Activated CD4-positive, alpha-beta memory T cell treated with anti-CD3 and anti-CD28 coated beads for 36 hours (primary cell): ENCODE measurements at regions of chr15 and their contacts with region 1.

Region 1: GRCh38 chr15:84658080-84658787 is at the start of gene NMB:
- DNase-seq: peak; percentile 90
- H3K4me3 Mint-ChIP-seq: peak within 1 kb of the TSS; percentile 69
- H3K27ac Mint-ChIP-seq: peak within 1 kb of the TSS; percentile 68
- H3K4me1 Mint-ChIP-seq: peaks cover 34% of the 10 kb centered on the region
- H3K27me3 Mint-ChIP-seq: no peaks in the 10 kb centered on the region
- total RNA-seq, gene NMB: 6.2 to 7.8 TPM

Region 2: DNA sequence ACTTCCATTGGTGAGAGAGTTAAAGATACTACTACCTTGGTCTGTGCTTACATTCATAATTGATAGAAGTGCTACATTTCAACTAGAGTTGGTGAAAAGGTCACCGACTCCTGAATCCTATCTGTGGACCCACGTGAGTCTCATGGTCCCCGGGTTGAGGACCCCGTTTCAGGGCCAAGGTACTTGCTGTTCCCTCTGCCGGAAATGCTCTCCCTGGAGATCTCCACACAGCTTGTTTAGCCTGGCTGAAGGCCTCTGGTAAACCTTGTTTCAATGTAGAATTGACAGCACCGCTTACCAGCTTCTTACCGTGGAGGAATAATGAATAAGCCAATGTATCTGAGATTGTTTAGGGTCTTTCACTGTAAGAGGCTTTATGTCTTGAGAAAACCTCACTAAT is 648.6 kb before region 1 on chr15:
- CTCF ChIA-PET with region 1: no interaction called
- POLR2A ChIA-PET with region 1: no interaction called
- intact Hi-C with region 1: no loop called
- DNase-seq: no peak
- H3K4me3 Mint-ChIP-seq: no peak overlapping the region
- H3K27ac Mint-ChIP-seq: no peak overlapping the region
- H3K4me1 Mint-ChIP-seq: no peaks in the 10 kb centered on the region
- H3K27me3 Mint-ChIP-seq: no peaks in the 10 kb centered on the region

Region 3: DNA sequence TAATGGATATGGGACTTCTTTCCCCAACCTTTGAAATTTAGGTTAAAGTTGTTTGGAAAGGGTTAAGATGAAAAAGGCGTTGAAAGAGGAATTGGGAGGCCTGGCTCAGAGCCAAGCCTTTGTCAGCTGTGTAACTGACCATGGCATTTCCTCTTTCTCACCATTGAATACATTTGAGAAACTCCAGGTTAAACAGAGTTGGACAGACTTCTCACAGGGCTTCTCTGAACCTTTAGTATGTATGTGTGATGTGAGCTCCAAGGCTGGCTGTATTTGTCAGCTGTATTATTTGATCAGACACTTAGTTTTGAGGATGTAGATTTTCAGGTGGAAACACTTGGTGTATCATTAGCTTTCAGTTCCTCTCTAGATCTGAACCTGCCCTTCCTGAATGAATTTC is 559.1 kb before region 1 on chr15:
- CTCF ChIA-PET with region 1: no interaction called
- POLR2A ChIA-PET with region 1: no interaction called
- intact Hi-C with region 1: no loop called
- DNase-seq: no peak
- H3K4me3 Mint-ChIP-seq: no peak overlapping the region
- H3K27ac Mint-ChIP-seq: no peak overlapping the region
- H3K4me1 Mint-ChIP-seq: no peaks in the 10 kb centered on the region
- H3K27me3 Mint-ChIP-seq: peaks cover 5% of the 10 kb centered on the region

Region 4: DNA sequence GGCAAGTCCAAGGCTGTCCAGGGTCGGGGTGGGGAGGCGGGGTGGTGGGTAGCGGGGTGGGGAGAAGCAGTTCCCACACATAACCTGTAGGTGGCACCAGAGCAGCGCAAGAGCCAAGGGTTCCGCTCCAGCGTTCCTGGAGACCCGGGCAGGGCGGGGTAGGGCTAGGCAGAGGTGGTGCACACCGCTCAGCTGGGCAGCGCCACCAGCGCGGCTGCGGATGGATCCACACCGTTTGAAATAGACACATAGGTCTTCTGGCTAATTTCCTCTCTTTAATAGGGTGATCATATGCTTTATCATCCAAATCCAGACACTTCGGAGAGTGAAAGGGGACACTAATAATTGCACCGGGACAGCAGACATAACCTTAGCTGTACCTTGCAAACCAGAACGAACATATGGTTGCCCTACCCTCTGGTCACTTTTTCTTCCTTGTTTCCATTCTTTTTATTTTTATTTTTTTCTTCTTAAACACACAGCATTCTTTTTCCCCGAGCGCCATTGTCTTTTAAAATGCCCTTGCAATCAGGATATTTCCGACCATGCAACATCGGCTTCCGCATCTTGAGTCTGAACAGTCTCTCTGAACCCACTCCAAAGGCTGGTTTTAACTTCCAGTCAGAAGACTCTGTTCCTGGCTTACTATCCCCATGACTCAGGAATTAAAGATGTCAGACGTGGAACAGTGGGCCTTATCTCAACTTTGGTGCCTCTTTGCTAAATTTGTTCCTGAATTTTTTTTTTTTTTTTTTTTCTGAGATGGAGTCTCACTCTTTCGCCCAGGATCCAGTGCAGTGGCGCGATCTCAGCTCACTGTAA is 70.0 kb before region 1 on chr15:
- CTCF ChIA-PET with region 1: interaction called, 14 read pairs
- POLR2A ChIA-PET with region 1: no interaction called
- intact Hi-C with region 1: loop called (anchors 5 kb)
- DNase-seq: peak; percentile 91
- H3K4me3 Mint-ChIP-seq: peak overlapping the region; percentile 59
- H3K27ac Mint-ChIP-seq: no peak overlapping the region
- H3K4me1 Mint-ChIP-seq: peaks cover 2% of the 10 kb centered on the region
- H3K27me3 Mint-ChIP-seq: no peaks in the 10 kb centered on the region

Region 5: GRCh38 chr15:84669726-84670125 is 11.5 kb after region 1 on chr15:
- CTCF ChIA-PET with region 1: interaction called, 7 read pairs
- POLR2A ChIA-PET with region 1: interaction called, 8 read pairs
- intact Hi-C with region 1: loop called (anchors 1 kb)
- DNase-seq: peak; percentile 76
- H3K4me3 Mint-ChIP-seq: no peak overlapping the region
- H3K27ac Mint-ChIP-seq: peak overlapping the region; percentile 79
- H3K4me1 Mint-ChIP-seq: peaks cover 60% of the 10 kb centered on the region
- H3K27me3 Mint-ChIP-seq: no peaks in the 10 kb centered on the region

Region 6: DNA sequence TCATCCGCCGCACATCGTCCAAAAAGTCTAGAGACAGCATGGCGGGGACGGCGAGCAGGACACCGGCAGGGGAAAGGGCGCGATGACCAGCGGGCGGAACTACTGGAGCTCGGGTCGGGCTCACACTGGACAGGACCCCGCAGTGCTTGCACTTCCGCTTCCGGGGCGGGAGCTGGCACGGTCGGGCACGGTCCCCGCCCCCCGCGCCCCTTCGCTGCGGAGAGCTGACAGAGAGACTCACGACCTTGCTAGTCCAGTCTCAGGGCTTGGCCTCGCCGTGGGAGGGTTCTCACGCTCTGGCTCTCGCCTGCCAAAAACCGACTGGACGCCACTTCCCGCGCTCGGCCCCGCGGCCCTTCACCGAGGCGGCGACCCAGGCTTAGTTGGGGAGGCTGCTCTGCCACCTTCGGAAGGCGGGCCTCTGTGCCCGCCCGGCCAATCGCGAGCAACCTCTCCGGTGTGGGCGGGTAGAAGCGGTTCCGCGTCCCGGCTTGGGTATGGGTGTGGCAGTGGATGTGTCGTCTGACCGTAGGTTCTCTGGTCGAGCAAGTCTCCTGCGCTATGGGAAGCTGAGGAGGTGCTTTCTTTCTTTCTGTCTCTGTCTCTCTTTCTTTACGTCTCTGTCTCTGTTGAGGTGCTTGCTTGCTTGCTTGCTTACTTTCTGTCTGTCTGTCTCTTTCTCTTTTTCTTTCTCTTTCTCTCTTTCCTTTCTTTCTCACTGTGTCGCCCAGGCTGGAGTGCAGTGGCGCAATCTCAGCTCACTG is 58.0 kb after region 1 on chr15 and contains the start of gene SEC11A:
- CTCF ChIA-PET with region 1: interaction called, 25 read pairs
- POLR2A ChIA-PET with region 1: interaction called, 9 read pairs
- intact Hi-C with region 1: loop called (anchors 2 kb)
- DNase-seq: peak; percentile 96
- H3K4me3 Mint-ChIP-seq: peak within 1 kb of the TSS; percentile 92
- H3K27ac Mint-ChIP-seq: peak within 1 kb of the TSS; percentile 93
- H3K4me1 Mint-ChIP-seq: peaks cover 46% of the 10 kb centered on the region
- H3K27me3 Mint-ChIP-seq: no peaks in the 10 kb centered on the region
- total RNA-seq, gene SEC11A: 132 to 136 TPM

Region 7: GRCh38 chr15:84748274-84749110 is 90.3 kb after region 1 on chr15 and contains the start of gene ZNF592:
- CTCF ChIA-PET with region 1: interaction called, 6 read pairs
- POLR2A ChIA-PET with region 1: interaction called, 7 read pairs
- intact Hi-C with region 1: loop called (anchors 1 kb)
- DNase-seq: peak; percentile 84
- H3K4me3 Mint-ChIP-seq: peak within 1 kb of the TSS; percentile 97
- H3K27ac Mint-ChIP-seq: peak within 1 kb of the TSS; percentile 98
- H3K4me1 Mint-ChIP-seq: peaks cover 57% of the 10 kb centered on the region
- H3K27me3 Mint-ChIP-seq: no peaks in the 10 kb centered on the region
- total RNA-seq, gene ZNF592: 23.8 to 24.3 TPM

Region 8: DNA sequence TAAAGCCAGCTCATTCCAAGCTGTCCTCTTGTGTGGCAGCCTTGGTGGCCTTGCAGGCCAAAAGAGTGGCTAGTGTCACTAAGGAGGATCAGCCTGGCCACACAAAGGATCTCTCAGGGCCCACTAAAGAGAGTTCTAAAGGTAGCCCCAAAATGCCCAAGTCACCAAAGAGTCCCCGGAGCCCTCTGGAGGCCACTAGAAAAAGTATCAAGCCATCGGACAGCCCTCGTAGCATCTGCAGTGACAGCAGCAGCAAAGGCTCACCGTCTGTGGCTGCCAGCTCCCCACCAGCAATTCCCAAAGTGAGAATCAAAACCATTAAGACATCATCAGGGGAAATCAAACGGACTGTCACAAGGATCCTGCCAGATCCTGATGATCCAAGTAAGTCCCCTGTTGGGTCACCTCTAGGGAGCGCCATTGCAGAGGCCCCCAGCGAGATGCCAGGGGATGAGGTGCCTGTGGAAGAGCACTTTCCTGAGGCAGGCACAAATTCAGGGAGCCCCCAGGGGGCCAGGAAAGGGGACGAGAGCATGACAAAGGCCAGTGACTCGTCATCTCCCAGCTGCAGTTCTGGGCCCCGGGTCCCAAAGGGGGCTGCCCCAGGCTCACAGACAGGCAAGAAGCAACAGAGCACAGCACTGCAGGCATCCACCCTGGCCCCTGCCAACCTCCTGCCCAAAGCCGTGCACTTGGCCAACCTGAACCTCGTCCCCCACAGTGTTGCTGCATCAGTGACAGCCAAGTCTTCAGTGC is 125.4 kb after region 1 on chr15:
- CTCF ChIA-PET with region 1: no interaction called
- POLR2A ChIA-PET with region 1: no interaction called
- intact Hi-C with region 1: no loop called
- DNase-seq: no peak
- H3K4me3 Mint-ChIP-seq: no peak overlapping the region
- H3K27ac Mint-ChIP-seq: no peak overlapping the region
- H3K4me1 Mint-ChIP-seq: peaks cover 50% of the 10 kb centered on the region
- H3K27me3 Mint-ChIP-seq: no peaks in the 10 kb centered on the region

Region 9: GRCh38 chr15:84833447-84834228 is 175.4 kb after region 1 on chr15:
- CTCF ChIA-PET with region 1: no interaction called
- POLR2A ChIA-PET with region 1: no interaction called
- intact Hi-C with region 1: no loop called
- DNase-seq: no peak
- H3K4me3 Mint-ChIP-seq: no peak overlapping the region
- H3K27ac Mint-ChIP-seq: no peak overlapping the region
- H3K4me1 Mint-ChIP-seq: no peaks in the 10 kb centered on the region
- H3K27me3 Mint-ChIP-seq: no peaks in the 10 kb centered on the region

Region 10: DNA sequence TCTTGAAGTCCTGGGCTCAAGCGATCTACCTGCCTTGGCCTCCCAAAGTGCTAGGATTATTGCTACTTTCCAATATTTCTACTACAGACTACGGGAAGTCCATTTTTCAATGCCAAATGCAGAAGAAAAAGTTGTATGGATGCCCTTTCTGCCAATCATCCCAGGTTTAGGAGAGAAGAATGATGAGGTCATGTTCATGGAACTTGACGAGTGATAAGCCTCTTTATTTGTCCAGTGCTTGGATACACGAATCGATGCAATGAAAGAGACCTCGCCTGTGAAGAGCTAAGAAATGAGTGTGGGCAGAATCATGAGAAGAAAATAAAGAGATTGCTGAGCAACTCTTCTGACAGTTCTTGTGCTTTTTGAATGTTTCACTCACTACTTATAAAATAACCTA is 225.2 kb after region 1 on chr15:
- CTCF ChIA-PET with region 1: interaction called, 13 read pairs
- POLR2A ChIA-PET with region 1: no interaction called
- intact Hi-C with region 1: loop called (anchors 1 kb)
- DNase-seq: no peak
- H3K4me3 Mint-ChIP-seq: no peak overlapping the region
- H3K27ac Mint-ChIP-seq: no peak overlapping the region
- H3K4me1 Mint-ChIP-seq: no peaks in the 10 kb centered on the region
- H3K27me3 Mint-ChIP-seq: no peaks in the 10 kb centered on the region